Activated CD4-positive, alpha-beta T cell treated with anti-CD3 and anti-CD28 coated beads, Interleukin-2, amount 10 ng/mL, durations not matched to agents 24 days and 14 days (primary cell): ENCODE measurements at regions of chr11 and their contacts with region 1.

Region 1: DNA sequence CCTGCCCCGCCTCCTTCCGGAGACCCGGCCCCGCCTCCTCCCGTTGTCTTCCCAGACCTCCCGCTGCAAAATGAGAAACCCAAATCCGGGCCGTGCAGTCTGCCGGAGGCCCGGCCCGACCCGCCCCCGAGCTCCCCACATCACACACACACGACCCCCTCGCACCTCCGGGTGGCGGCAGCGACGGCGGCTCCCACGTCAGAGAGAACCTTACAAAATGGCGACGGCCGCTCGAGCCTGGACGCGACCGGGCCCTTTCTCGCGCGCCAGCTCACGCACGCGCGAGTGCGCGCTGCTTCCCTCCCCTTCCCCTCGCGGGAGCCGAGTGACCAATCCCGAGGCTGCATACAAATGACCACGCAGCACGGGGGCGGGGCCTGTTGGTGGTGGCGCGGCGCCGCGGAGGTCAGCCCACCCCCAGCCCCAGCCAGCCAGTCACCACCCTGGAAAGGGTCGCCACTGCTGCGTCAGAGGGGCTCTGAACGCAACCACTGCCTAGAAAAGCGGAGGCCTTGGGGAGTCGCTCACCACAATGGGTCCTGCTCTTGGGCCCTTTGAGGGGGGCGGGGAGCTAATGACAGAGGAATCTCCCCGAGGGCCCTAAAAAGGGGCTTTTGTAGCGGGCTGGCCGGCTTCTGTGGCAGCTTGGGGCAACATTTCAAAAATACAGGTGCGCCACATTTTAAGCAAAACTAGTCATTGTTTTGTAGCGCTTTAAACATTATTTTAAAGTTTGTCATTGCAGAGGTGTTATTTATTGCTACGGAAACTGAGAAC is at the start of gene RBM4B:
- DNase-seq: peak; percentile 99
- H3K4me3 Mint-ChIP-seq: peak within 1 kb of the TSS; percentile 96
- H3K27ac Mint-ChIP-seq: peak within 1 kb of the TSS; percentile 99
- H3K4me1 Mint-ChIP-seq: peaks cover 34% of the 10 kb centered on the region
- H3K27me3 Mint-ChIP-seq: no peaks in the 10 kb centered on the region
- total RNA-seq, gene RBM4B: 15.6 and 16.0 TPM in 2 replicates

Region 2: GRCh38 chr11:66371627-66372415 is 306.0 kb before region 1 on chr11 and contains the start of gene SLC29A2:
- intact Hi-C with region 1: no loop called
- DNase-seq: peak; percentile 93
- H3K4me3 Mint-ChIP-seq: peak within 1 kb of the TSS; percentile 88
- H3K27ac Mint-ChIP-seq: peak within 1 kb of the TSS; percentile 89
- H3K4me1 Mint-ChIP-seq: peaks cover 17% of the 10 kb centered on the region
- H3K27me3 Mint-ChIP-seq: peaks cover 2% of the 10 kb centered on the region
- total RNA-seq, gene SLC29A2: 17.4 and 18.9 TPM in 2 replicates

Region 3: DNA sequence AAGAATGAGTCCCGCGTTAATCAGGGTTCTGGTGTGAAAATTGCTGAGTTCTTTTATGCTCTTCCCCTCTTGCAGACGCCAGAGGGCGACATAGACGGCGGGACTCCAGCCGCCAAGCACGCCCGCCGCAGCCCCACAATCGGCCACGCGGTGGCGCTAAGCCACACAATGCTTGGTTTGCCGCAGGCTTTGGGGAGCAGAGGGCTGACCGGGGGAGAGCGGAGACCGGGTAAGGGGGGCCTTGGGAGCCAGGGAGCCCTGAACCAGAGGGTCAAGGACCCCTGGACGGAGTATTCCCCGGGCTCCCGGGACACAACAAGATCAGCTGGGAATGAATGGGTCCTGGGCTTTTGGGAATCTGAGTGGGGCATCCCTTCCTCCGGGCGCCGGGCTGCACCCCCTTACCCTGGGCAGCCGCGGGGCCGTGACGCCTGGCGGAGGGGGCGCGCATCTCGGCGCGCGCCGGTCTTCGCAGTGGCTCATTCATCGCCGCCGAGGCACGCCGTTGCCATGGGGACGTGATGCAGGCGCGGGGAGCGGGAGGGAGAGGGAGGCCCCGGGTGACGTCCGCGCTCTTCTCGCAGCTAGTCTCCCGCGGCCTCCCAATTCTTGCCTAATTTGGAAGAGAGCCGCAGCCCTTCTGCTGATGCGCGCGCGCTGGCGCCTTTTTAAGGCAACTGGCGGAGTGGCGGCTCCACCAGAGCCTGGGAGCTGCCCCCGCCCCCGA is 269.1 kb before region 1 on chr11:
- intact Hi-C with region 1: loop called (anchors 1 kb)
- DNase-seq: peak; percentile 98
- H3K4me3 Mint-ChIP-seq: peak overlapping the region; percentile 88
- H3K27ac Mint-ChIP-seq: peak overlapping the region; percentile 74
- H3K4me1 Mint-ChIP-seq: peaks cover 8% of the 10 kb centered on the region
- H3K27me3 Mint-ChIP-seq: peaks cover 18% of the 10 kb centered on the region

Region 4: GRCh38 chr11:66545701-66546367 is 132.0 kb before region 1 on chr11 and contains the start of gene ZDHHC24:
- intact Hi-C with region 1: loop called (anchors 1 kb)
- DNase-seq: peak; percentile 97
- H3K4me3 Mint-ChIP-seq: peak within 1 kb of the TSS; percentile 89
- H3K27ac Mint-ChIP-seq: peak within 1 kb of the TSS; percentile 80
- H3K4me1 Mint-ChIP-seq: peaks cover 17% of the 10 kb centered on the region
- H3K27me3 Mint-ChIP-seq: peaks cover 13% of the 10 kb centered on the region
- total RNA-seq, gene ZDHHC24: 12.2 and 13.9 TPM in 2 replicates

Region 5: DNA sequence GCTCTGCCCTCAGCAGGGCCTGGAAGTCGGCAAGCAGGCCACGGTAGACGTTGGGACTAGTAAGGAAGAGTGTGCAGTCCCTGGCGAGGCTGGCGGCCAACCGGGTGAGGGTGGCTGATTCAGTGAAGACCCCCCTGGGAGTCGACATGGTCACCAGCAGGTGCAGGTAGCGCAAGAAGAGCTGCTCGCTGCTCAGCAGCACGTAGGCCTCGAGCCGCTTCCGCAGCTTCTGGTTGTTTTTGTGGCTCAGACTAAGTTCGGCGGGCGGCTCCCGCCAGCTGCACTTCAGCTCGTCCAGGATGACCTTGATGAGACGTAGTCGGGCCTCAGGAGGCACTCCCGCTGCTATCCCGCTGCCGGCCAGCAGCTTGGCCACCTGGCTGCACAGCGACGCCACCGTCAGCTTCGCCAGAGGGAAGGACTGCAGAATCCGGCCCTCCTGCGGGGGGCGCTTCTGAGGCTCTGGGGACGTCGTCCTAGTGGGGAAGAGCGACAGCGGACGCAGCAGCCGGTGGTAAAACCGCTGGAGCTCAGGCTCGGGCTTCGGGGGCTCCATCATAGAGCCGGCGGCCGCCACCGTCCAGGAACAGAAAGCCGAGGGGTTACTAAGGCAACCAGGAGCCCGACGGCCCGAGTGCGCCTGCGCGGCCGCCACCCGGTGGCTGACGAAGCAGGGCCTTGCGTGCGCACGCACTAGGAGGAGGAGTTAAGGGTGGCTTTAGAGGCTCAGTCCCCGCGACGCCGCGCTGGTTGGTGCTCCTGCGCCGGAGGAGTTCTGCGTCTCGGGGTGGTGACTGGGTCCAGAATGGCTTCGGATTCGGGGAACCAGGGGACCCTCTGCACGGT is 85.1 kb before region 1 on chr11 and contains the starts of genes CCDC87 and CCS:
- intact Hi-C with region 1: loop called (anchors 1 kb)
- DNase-seq: peak; percentile 99
- H3K4me3 Mint-ChIP-seq: peak within 1 kb of the TSS; percentile 99
- H3K27ac Mint-ChIP-seq: peak within 1 kb of the TSS; percentile 97
- H3K4me1 Mint-ChIP-seq: peaks cover 21% of the 10 kb centered on the region
- H3K27me3 Mint-ChIP-seq: no peaks in the 10 kb centered on the region
- total RNA-seq, gene CCDC87: 0.19 and 0.21 TPM in 2 replicates
- total RNA-seq, gene CCS: 28.3 and 31.4 TPM in 2 replicates

Region 6: DNA sequence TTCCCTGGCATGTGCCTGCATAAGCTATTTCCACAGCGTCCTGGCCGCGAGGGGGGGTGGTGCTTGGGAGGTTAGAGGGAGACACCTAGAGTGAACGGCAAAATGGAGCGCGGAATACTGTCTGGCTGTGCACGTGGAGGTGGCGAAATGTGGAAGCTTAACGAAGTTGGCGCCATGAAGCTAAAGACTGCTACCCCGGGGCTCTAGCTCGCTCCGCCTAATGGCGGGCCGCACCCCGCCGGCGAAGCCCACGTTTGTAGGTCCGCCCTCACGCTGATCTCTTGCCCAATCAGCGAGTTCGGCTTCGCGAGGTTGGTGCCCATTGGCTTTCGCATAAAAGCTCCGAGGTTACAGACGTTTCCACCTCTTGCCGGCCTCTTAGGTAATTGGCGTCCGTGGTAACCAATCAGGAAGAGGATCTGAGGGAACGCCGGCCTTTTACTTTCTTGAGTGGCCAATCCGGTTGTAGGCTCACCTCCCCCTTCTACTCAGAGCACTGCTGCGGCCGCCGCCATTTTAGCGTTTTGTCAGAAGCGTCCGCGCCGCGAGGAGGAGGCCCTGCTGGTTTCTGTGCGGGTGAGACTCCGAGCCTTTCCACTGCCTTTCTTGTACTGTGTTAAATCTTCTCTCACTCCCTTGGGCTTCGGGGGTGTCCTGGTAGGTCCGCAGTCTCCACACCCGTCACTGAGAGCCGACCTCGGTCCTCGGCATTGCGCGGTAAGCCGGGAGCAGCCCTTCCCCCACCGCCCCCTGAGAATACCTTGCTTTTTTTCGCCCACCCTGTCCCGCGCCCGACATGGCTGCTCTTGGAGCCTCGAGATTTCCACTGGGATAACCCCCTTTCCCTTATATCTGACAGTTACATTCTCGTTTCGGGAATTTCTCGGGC is 39.4 kb before region 1 on chr11 and contains the start of gene RBM4:
- intact Hi-C with region 1: loop called (anchors 1 kb)
- DNase-seq: peak; percentile 99
- H3K4me3 Mint-ChIP-seq: peak within 1 kb of the TSS; percentile 91
- H3K27ac Mint-ChIP-seq: peak within 1 kb of the TSS; percentile 98
- H3K4me1 Mint-ChIP-seq: peaks cover 53% of the 10 kb centered on the region
- H3K27me3 Mint-ChIP-seq: no peaks in the 10 kb centered on the region
- total RNA-seq, gene RBM4: 109 and 133 TPM in 2 replicates

Region 7: GRCh38 chr11:66688561-66689534 is 11.1 kb after region 1 on chr11:
- intact Hi-C with region 1: no loop called
- DNase-seq: no peak
- H3K4me3 Mint-ChIP-seq: no peak overlapping the region
- H3K27ac Mint-ChIP-seq: no peak overlapping the region
- H3K4me1 Mint-ChIP-seq: no peaks in the 10 kb centered on the region
- H3K27me3 Mint-ChIP-seq: no peaks in the 10 kb centered on the region